ENCODE measurements at regions of chr12 and their contacts with region 1.

Region 1: GRCh38 chr12:51871126-51871525 is 16.8 kb upstream of the ANKRD33 start:
- DNase-seq: no peak
- ATAC-seq: no peak
- H3K4me3 Mint-ChIP-seq: no peak overlapping the region
- H3K27ac Mint-ChIP-seq: no peak overlapping the region
- H3K4me1 Mint-ChIP-seq: peaks cover 63% of the 10 kb centered on the region
- H3K27me3 Mint-ChIP-seq: peaks cover 48% of the 10 kb centered on the region
- CTCF ChIP-seq: no peak

Region 2: GRCh38 chr12:51721282-51721940 is 149.7 kb before region 1 on chr12:
- CTCF ChIA-PET with region 1: no interaction called
- POLR2A ChIA-PET with region 1: no interaction called
- DNase-seq: peak; percentile 81
- ATAC-seq: peak; percentile 99
- H3K4me3 Mint-ChIP-seq: peak overlapping the region; percentile 59
- H3K27ac Mint-ChIP-seq: no peak overlapping the region
- H3K4me1 Mint-ChIP-seq: no peaks in the 10 kb centered on the region; the same call in 1 of the 2 replicates
- H3K27me3 Mint-ChIP-seq: peaks cover 7% of the 10 kb centered on the region
- CTCF ChIP-seq: no peak

Region 3: GRCh38 chr12:51823875-51824565 is 47.1 kb before region 1 on chr12:
- CTCF ChIA-PET with region 1: interaction called, 164 read pairs
- POLR2A ChIA-PET with region 1: interaction called, 3 read pairs
- DNase-seq: no peak
- ATAC-seq: peak; percentile 31
- H3K4me3 Mint-ChIP-seq: no peak overlapping the region; the same call in 1 of the 2 replicates
- H3K27ac Mint-ChIP-seq: no peak overlapping the region
- H3K4me1 Mint-ChIP-seq: peaks cover 33% of the 10 kb centered on the region
- H3K27me3 Mint-ChIP-seq: peaks cover 23% of the 10 kb centered on the region
- CTCF ChIP-seq: no peak

Region 4: DNA sequence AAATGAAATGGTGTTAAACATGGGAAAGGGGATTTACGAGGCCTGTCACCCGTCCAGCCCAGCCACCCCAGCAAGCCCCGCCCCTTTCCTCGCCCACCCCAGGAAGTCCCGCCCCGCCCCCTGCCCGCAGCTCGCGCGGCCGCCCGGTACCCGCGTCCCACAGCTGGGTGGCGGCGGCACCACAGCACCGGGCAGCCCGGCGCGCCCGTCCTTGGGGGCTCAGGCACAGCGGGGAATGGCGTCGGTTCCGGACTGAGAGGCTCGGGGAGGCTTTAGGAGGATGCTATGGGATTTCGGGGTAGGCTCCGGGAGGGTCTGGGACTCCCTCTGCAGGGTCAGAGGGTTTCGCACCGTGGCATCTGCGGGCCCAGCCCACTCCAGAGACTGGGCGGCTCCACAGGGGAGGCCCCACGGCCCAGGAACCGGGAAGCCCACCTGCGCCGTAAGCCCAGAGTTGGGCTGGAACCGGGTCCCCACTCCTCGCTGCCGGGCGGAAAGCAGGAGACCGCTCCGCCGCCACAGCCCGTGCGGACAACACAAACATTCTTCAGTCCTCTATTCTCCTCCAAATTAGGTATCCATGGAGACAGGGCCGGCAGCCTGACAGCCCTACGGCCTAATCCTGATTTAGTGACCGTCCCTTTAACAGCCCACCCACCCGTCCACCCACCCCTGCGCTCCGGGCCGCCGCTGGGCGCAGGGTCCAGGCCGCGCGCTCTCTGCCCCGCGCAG is 24.0 kb before region 1 on chr12:
- CTCF ChIA-PET with region 1: interaction called, 25 read pairs
- POLR2A ChIA-PET with region 1: interaction called, 3 read pairs
- DNase-seq: peak; percentile 64
- ATAC-seq: peak; percentile 41
- H3K4me3 Mint-ChIP-seq: peak overlapping the region; percentile 75
- H3K27ac Mint-ChIP-seq: no peak overlapping the region
- H3K4me1 Mint-ChIP-seq: peaks cover 39% of the 10 kb centered on the region
- H3K27me3 Mint-ChIP-seq: peaks cover 52% of the 10 kb centered on the region
- CTCF ChIP-seq: no peak

Region 5: DNA sequence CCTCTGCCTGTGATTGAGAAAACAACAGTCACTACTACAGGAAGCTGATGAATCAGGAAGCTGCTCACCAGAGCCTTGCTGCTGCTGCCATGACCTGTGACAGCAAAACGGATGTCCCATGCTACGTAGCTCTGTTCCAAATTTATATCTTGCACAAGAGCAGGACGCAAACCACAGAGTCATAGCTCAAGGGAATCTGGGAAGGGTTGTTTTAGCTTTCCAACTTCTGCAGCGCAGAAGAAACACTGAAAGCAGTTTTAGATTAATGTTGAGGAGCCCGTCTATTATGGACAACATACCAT is 14.8 kb after region 1 on chr12:
- CTCF ChIA-PET with region 1: interaction called, 56 read pairs
- POLR2A ChIA-PET with region 1: interaction called, 4 read pairs
- DNase-seq: no peak
- ATAC-seq: no peak
- H3K4me3 Mint-ChIP-seq: no peak overlapping the region
- H3K27ac Mint-ChIP-seq: no peak overlapping the region
- H3K4me1 Mint-ChIP-seq: peaks cover 25% of the 10 kb centered on the region
- H3K27me3 Mint-ChIP-seq: peaks cover 16% of the 10 kb centered on the region
- CTCF ChIP-seq: no peak

Region 6: GRCh38 chr12:51923501-51924271 is 52.6 kb after region 1 on chr12:
- CTCF ChIA-PET with region 1: interaction called, 10 read pairs
- POLR2A ChIA-PET with region 1: no interaction called
- DNase-seq: peak; percentile 79
- ATAC-seq: peak; percentile 84
- H3K4me3 Mint-ChIP-seq: peak overlapping the region; percentile 52
- H3K27ac Mint-ChIP-seq: no peak overlapping the region
- H3K4me1 Mint-ChIP-seq: peaks cover 26% of the 10 kb centered on the region
- H3K27me3 Mint-ChIP-seq: peaks cover 22% of the 10 kb centered on the region
- CTCF ChIP-seq: peak; percentile 77